ENCODE measurements at regions of chr20 and their contacts with region 1.

Region 1: DNA sequence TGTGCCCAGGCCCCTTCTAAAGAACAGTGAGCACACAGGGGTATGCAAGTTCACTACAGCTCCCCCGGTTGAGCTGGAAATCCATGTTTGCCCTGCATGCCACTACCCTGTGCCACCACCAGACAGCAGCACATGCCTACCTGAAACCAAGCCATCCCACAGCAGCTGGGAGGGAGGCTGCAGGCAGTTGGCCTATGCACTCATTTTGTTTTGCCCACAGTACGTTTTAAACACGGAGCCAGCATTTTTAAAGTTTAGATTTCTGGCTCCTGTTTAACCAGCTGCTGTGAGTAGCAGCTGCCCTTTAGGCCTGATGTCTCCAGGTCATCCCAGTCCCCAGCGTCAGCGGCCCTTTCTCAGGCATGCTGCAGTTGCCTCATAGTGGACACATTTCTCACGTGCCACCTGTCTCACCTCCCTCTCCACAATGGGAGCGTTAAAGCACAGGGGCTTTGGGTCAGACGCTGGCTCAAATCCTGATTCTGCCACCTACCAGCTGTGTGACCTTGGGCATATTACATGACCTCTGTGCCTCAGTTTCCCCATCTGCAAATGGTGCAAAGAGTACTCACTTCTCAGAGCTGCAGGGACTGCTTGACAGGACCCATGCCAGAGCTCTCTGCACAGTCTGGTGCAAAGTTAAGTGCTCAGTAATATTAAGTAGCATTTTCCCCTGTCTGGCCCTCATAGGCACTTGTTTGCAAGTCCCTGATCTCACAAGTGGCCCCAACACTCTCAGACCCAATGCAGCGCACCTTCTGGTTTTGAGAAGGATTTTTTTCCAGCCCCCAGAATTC is 8.1 kb upstream of the UBE2V1 start:
- DNase-seq: peak in 1 of 2 donors; percentile 72
- ATAC-seq: peak; percentile 71
- H3K4me3 ChIP-seq: no peak overlapping the region
- H3K27ac ChIP-seq: no peak overlapping the region
- H3K4me1 ChIP-seq: no peaks in the 10 kb centered on the region
- H3K27me3 ChIP-seq: no peaks in the 10 kb centered on the region

Region 2: DNA sequence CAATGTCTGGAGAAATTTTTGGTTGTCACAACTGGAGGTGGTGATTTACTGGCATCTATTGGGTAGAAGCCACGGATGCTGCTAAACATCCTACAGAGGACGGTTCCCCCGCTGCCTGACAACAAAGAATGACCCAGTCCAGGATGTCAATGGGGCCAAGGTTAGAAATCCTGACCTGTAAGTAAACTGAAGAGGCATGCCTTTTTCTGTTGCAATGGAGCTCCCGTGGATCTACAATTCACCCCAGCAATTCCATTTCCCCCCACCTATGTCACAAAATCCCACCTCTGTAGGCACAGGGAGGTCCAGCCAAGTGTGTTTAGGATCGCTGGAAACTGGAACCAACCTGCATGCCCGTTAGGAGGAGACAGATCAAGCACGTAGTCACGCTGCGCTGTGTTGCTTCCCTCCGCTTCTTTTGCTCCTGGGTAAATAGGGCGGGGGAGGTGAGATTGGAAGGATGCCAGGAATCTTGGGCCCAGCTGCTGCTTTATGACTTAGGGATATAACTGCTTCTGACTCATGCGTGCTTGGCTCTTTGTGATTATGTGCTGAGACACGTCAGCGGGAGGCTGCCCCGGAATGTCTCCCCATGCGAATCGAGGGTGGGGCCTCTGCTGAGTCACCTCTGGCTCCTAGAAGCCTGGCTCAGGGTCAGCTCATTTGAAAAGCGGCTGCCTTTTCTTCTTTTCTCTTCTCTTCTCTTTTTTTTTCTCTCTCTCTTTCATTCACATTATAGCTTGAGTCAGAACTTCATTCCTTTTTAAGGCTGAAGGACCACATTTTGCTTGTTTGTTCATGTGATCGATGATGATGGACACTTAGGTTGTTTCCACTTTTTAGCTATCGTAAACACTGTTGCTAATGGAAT is 44.8 kb after region 1 on chr20:
- intact Hi-C with region 1: loop called (anchors 1 to 2 kb)
- DNase-seq: peak; percentile 98
- ATAC-seq: peak; percentile 97
- H3K4me3 ChIP-seq: peak overlapping the region in 1 of 2 donors; percentile 26
- H3K27ac ChIP-seq: peak overlapping the region in 1 of 2 donors; percentile 85
- H3K4me1 ChIP-seq: no peaks in the 10 kb centered on the region
- H3K27me3 ChIP-seq: no peaks in the 10 kb centered on the region

Measured in aorta (tissue), 5 donors.